Gastrocnemius medialis (tissue), 4 donors: ENCODE measurements at regions of chr3 and their contacts with region 1.

Region 1: DNA sequence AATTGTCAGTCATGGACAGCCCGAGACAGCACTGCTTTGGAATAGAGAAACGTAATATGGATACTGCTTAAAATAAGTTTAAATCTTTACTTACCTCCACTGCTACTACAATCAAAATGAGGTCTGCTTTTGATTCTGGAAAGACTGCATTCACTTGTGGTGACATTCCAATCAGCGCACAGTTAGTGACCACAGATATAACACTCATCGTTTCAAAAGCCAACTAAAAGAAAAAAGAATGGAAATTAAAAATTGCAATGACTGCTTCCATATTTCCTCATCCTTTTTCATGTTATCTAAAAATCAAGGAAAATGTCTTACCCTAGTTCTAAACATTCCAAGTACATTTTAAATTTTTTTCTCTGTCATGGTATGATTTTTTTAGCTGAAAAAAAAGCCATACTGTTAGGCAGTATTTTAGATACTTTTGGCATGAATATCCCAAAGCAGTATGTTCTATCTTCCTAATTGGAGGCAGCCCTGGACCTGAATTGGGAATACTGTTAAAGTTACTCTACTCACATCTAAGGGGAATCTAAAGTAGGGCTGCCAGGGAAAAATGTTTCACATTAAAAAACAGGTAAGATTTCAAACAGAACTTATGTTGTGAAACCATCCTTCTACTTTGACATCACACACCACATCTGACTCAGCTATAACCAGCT is 72.1 kb downstream of the ANO10 start:
- DNase-seq: no peak
- ATAC-seq: no peak
- H3K4me3 ChIP-seq: no peak overlapping the region
- H3K27ac ChIP-seq: no peak overlapping the region
- H3K4me1 ChIP-seq: no peaks in the 10 kb centered on the region
- H3K27me3 ChIP-seq: no peaks in the 10 kb centered on the region
- CTCF ChIP-seq: no peak
- POLR2A ChIP-seq: no peak

Region 2: DNA sequence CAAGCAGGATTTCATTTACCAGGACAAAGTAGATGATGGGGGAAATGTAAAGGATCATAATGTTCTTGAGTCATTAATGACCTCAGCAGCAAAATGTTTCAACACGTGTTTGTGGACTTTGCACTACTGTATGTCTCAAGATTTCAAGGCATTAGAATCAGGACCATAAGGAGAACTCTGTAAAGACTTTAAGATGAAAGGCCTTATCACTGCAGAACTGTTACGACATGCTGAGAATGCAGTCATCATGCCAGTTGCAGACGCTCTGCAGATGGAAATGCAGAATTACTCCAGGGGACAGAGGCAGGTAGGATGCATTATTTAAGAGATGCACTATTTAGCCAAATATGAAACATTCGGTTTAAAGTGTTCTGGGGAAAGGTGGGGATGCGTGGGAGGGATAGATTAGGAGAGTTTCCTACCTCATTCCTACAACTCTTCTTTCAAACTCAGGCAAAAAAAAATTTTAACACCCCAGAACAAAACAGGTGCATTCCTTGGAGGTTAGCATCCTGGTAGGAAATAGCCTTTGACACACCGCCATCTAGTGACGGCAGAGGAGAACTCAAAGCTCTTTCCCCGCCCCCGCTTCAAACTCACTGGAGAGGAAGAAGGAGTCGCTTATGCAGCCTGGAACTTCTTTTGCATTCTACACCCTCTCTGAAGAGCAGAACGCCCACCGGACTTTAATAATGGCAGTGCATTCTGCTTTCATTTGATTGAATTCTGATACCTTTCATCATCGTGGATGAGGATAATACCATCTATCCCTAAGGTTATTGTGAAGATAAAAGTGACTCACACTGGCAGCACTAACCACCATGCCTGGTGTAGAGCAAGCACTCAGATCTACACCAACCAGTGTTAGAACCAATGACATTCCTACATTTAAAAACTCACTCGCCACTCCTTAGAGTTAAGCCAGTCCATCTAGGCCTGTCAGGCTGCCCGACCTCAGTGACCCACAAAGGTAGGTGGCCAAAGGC is 648.8 kb after region 1 on chr3:
- in situ Hi-C with region 1: loop called (anchors 5 to 10 kb)
- intact Hi-C with region 1: loop called (anchors 1 kb)
- DNase-seq: peak; percentile 36 to 39
- ATAC-seq: peak; percentile 80 to 82
- H3K4me3 ChIP-seq: no peak overlapping the region
- H3K27ac ChIP-seq: no peak overlapping the region
- H3K4me1 ChIP-seq: no peaks in the 10 kb centered on the region
- H3K27me3 ChIP-seq: no peaks in the 10 kb centered on the region
- CTCF ChIP-seq: peak; percentile 43 to 82 (median 71)
- POLR2A ChIP-seq: no peak